ENCODE measurements at regions of chr20 and their contacts with region 1.

Region 1: GRCh38 chr20:44080646-44081267 is 106.2 kb downstream of the JPH2 start:
- DNase-seq: peak; percentile 76
- ATAC-seq: peak; percentile 98
- H3K4me3 ChIP-seq: no peak overlapping the region
- H3K27ac ChIP-seq: no peak overlapping the region
- H3K4me1 ChIP-seq: peaks cover 11% of the 10 kb centered on the region
- H3K27me3 ChIP-seq: no peaks in the 10 kb centered on the region
- CTCF ChIP-seq: peak; percentile 99
- POLR2A ChIP-seq: 0 out of 2 replicates have a peak, but pooled peaks have one; percentile 30
- RAD21 ChIP-seq: peak; percentile 100

Region 2: GRCh38 chr20:43463864-43464785 is 616.6 kb before region 1 on chr20:
- CTCF ChIA-PET with region 1: no interaction called
- POLR2A ChIA-PET with region 1: no interaction called
- dilution Hi-C with region 1: no loop called
- in situ Hi-C with region 1: no loop called
- intact Hi-C with region 1: loop called (anchors 5 kb)
- DNase-seq: no peak
- ATAC-seq: no peak
- H3K4me3 ChIP-seq: no peak overlapping the region
- H3K27ac ChIP-seq: no peak overlapping the region
- H3K4me1 ChIP-seq: peaks cover under 1% of the 10 kb centered on the region; the same call in 1 of the 2 replicates
- H3K27me3 ChIP-seq: no peaks in the 10 kb centered on the region
- CTCF ChIP-seq: no peak
- POLR2A ChIP-seq: peak; percentile 49
- RAD21 ChIP-seq: no peak

Region 3: DNA sequence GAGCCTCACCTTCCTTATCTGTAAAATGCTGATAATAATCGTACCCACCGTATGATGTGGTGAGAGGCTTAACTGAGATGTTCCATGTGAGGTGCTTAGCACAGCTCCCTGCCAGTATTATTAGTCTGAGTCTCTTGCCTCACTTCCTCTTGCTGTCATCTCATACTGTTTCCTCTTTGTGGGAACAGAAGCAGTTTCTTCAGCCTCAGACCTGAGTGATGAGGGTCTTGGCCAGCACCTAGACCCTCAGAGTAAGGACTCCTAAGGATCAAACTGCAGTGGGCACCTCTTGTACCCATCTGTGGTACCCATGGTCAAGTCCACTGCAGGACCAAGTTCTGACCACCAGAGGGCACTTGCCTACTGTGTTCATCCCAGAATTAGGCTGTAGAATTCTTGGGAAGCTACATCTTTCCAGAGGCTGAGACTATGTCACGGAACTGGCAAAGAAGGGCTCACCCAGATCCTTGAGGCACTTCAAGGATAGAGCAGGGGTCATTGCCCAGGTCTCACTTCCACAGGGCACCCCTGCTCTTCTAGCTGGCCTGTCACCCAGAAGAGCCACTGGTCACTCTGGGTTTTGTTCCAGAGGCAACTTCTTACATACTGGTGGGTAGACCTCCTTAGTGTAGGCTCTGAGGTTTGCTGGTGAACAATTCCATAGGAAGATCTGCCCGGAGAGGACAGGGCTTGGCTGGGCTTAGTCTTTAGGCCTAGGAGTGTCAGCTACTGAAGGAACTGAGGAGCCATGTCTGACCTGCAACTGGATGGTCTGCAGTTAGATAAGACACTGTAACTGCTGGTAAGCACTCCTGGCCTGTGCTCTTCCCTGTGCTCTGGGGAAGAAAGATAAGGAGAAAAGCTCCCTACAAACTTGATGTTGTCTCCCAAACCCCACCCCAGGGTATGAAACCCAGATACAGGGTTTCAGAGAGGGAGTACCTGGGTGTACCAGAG is 542.6 kb before region 1 on chr20:
- CTCF ChIA-PET with region 1: interaction called, 4 read pairs
- POLR2A ChIA-PET with region 1: no interaction called
- dilution Hi-C with region 1: no loop called
- in situ Hi-C with region 1: loop called (anchors 5 kb)
- intact Hi-C with region 1: loop called (anchors 1 kb)
- DNase-seq: peak; percentile 60
- ATAC-seq: peak; percentile 96
- H3K4me3 ChIP-seq: no peak overlapping the region
- H3K27ac ChIP-seq: no peak overlapping the region
- H3K4me1 ChIP-seq: no peaks in the 10 kb centered on the region; the same call in 1 of the 2 replicates
- H3K27me3 ChIP-seq: no peaks in the 10 kb centered on the region; the same call in 1 of the 2 replicates
- CTCF ChIP-seq: peak; percentile 88
- POLR2A ChIP-seq: no peak
- RAD21 ChIP-seq: peak; percentile 83

Region 4: DNA sequence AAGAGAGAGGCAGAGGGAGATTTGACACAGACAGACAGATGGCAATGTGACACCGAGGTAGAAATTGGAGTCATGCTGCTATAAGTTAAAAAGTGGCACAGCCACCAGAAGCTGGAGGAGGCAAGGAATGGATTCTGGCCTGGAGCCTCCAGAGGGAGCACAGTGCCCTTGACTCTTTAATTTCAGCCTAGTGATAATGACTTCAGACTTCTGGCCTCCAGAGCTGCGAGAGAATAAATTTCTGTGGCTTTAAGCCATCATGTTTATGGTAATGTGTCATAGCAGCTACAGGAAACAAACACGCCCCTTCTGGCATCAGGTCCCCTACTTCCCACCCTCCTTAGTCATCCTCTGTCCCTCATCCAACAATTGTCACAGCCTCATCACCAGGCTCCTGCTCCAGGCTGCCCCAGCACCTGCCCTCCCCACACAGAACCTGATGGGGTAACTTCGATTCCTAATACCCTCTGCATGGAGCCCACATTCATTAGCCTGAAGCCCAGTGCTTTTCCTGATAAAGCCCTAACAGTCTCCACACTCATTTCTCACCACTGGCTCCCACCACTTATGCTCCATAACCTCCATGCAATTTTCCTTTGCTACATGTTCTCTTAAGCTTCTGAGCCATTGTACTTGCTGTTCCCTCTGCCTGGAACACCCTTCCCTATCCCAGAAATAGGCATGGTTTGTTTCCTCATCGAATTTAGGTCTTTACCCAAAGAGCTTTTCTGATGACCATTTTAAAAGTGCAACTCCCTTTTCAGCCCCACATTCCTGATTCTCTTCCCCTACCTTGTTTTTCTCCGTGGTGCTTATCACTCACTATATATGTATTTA is 235.8 kb before region 1 on chr20:
- CTCF ChIA-PET with region 1: interaction called, 7 read pairs
- POLR2A ChIA-PET with region 1: no interaction called
- dilution Hi-C with region 1: no loop called
- in situ Hi-C with region 1: no loop called
- intact Hi-C with region 1: loop called (anchors 1 kb)
- DNase-seq: peak; percentile 95
- ATAC-seq: peak; percentile 66
- H3K4me3 ChIP-seq: no peak overlapping the region
- H3K27ac ChIP-seq: no peak overlapping the region; the same call in 1 of the 2 replicates
- H3K4me1 ChIP-seq: peaks cover 20% of the 10 kb centered on the region
- H3K27me3 ChIP-seq: no peaks in the 10 kb centered on the region
- CTCF ChIP-seq: peak; percentile 49
- POLR2A ChIP-seq: no peak
- RAD21 ChIP-seq: peak; percentile 65

Region 5: GRCh38 chr20:43914311-43915210 is 166.2 kb before region 1 on chr20 and contains the start of gene TOX2:
- CTCF ChIA-PET with region 1: no interaction called
- POLR2A ChIA-PET with region 1: no interaction called
- dilution Hi-C with region 1: no loop called
- in situ Hi-C with region 1: no loop called
- intact Hi-C with region 1: loop called (anchors 2 kb)
- DNase-seq: no peak
- ATAC-seq: peak; percentile 92
- H3K4me3 ChIP-seq: peak within 1 kb of the TSS; percentile 61
- H3K27ac ChIP-seq: peak within 1 kb of the TSS; percentile 89
- H3K4me1 ChIP-seq: peaks cover 7% of the 10 kb centered on the region; the same call in 1 of the 2 replicates
- H3K27me3 ChIP-seq: no peaks in the 10 kb centered on the region
- CTCF ChIP-seq: no peak
- POLR2A ChIP-seq: no peak
- RAD21 ChIP-seq: no peak
- total RNA-seq, gene TOX2: 1.1 and 1.3 TPM in 2 replicates

Measured in IMR-90 (cell line).